ENCODE measurements at regions of chr19 and their contacts with region 1.

Region 1: DNA sequence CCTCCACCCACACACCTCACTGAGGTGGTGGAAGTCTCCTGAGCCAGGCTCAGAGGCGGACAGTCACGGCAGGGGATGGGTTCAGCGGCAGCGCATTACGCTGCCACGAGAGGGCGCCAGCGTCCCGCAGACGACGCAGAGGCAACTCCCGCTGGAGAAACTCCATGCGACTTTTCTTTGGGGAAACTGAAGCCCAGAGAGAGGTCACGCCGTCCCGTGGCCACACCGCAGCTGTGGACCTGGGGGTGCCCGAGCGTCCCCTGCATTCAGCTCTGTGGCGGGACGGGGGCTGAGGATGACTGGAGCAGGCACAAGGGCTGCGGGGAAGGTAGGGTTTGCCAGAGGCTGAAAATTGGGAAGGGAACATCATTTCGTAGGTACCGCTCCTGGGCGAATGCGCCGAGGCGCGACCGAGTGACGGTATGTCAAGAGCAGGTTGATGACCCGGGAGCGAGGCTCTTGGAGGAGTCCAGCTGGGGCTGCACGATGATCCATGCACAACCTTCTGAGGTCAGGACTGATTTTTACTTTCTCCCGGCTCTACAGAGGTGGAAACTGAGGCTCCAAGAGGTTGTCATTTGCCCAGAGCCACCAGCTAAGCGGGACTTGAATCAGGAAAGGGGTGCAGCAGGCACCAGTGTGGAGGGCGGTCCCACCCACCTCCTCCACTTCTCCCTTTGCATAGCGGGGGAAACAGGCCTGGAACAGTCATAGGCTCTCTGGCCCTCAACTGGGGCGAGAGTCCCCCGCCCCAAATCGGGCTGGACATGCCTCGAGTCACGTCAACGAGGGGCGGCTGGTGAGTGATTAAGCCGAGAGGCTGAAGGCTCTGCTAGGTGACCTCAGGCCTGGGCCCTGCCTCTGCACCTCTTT is 690 bp upstream of the ARRDC2 start:
- DNase-seq: peak; percentile 72 to 91 (median 80)
- ATAC-seq: peak; percentile 57
- H3K4me3 ChIP-seq: peak overlapping the region; percentile 61
- H3K4me3 Mint-ChIP-seq: peak overlapping the region; percentile 91
- H3K27ac ChIP-seq: peak overlapping the region; percentile 84 to 92
- H3K27ac Mint-ChIP-seq: peak overlapping the region; percentile 97
- H3K4me1 ChIP-seq: peaks cover 63% of the 10 kb centered on the region
- H3K4me1 Mint-ChIP-seq: peaks cover 34% of the 10 kb centered on the region
- H3K27me3 ChIP-seq: no peaks in the 10 kb centered on the region
- H3K27me3 Mint-ChIP-seq: peaks cover 5% of the 10 kb centered on the region
- CTCF ChIP-seq: peak; percentile 99

Region 2: DNA sequence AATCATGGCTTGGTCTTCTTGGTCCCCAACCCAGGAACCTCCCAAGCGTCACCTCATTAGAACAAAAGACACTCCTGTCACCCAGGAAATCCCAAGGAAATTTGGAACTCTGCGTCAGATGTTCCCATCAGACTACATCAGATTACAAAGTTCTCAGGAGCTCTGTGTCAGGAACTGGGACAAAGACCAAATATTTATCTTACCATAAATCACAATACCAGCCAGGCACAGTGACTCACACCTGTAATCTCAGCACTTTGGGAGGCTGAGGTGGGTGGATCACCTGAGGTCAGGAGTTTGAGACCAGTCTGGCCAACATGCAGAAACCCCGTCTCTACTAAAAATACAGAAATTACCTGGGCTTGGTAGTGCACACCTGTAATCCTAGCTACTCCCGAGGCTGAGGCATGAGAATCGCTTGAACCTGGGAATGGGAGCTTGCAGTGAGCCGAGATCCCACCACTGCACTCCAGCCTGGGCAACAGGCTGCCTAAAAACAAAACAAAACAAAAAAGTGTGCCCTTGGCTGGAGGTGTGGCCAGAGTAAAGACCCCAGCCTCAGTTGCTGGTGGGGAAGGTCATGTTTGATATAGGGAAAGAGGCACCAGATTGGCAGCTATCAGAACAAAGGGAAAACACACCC is 91.2 kb before region 1 on chr19:
- CTCF ChIA-PET with region 1: no interaction called
- POLR2A ChIA-PET with region 1: no interaction called
- intact Hi-C with region 1: no loop called
- DNase-seq: no peak
- ATAC-seq: no peak
- H3K4me3 ChIP-seq: no peak overlapping the region
- H3K4me3 Mint-ChIP-seq: no peak overlapping the region
- H3K27ac ChIP-seq: no peak overlapping the region
- H3K27ac Mint-ChIP-seq: no peak overlapping the region
- H3K4me1 ChIP-seq: no peaks in the 10 kb centered on the region
- H3K4me1 Mint-ChIP-seq: no peaks in the 10 kb centered on the region
- H3K27me3 ChIP-seq: peaks cover 2 to 8% of the 10 kb centered on the region in 2 experiments
- H3K27me3 Mint-ChIP-seq: peaks cover 5% of the 10 kb centered on the region
- CTCF ChIP-seq: no peak

Region 3: GRCh38 chr19:18023622-18024251 is 16.5 kb after region 1 on chr19:
- CTCF ChIA-PET with region 1: interaction called, 13 read pairs
- POLR2A ChIA-PET with region 1: interaction called, 20 read pairs
- intact Hi-C with region 1: loop called in 1 of 2 experiments (anchors 2 kb)
- DNase-seq: peak; percentile 49 to 95 (median 79)
- ATAC-seq: peak; percentile 84
- H3K4me3 ChIP-seq: no peak overlapping the region
- H3K4me3 Mint-ChIP-seq: peak overlapping the region; percentile 79
- H3K27ac ChIP-seq: peak overlapping the region; percentile 85 to 87
- H3K27ac Mint-ChIP-seq: peak overlapping the region; percentile 94
- H3K4me1 ChIP-seq: peaks cover 56% of the 10 kb centered on the region
- H3K4me1 Mint-ChIP-seq: peaks cover 57% of the 10 kb centered on the region
- H3K27me3 ChIP-seq: no peaks in the 10 kb centered on the region
- H3K27me3 Mint-ChIP-seq: no peaks in the 10 kb centered on the region
- CTCF ChIP-seq: no peak

Region 4: DNA sequence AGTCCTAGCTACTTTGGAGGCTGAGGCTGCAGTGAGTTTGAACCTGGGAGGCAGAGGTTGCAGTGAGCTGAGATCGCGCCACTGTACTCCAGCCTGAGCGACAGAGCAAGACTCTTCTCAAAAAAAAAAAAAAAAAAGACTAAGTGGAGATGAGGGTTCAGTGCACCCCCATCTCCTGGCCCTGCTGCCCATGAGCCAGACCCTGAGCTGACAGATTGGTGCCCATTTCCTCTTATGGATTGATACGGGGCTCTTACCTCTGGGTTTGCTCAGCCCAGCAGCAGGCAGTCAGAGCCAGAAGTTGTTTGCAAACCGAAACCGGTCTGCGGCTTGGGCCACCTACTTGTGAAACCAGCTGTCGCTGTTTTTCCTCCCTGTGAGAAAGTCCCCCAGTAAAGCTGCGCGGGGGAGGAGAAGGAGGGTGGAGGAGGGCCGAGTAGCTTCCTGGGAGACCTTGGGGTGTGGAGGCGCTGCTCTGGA is 37.6 kb after region 1 on chr19:
- CTCF ChIA-PET with region 1: interaction called, 12 read pairs
- POLR2A ChIA-PET with region 1: interaction called, 30 read pairs
- intact Hi-C with region 1: no loop called
- DNase-seq: peak; percentile 68 to 95 (median 79)
- ATAC-seq: peak; percentile 95
- H3K4me3 ChIP-seq: peak overlapping the region; percentile 53
- H3K4me3 Mint-ChIP-seq: peak overlapping the region; percentile 79
- H3K27ac ChIP-seq: peak overlapping the region; percentile 56 to 67
- H3K27ac Mint-ChIP-seq: peak overlapping the region; percentile 92
- H3K4me1 ChIP-seq: peaks cover 34% of the 10 kb centered on the region
- H3K4me1 Mint-ChIP-seq: peaks cover 36% of the 10 kb centered on the region
- H3K27me3 ChIP-seq: no peaks in the 10 kb centered on the region
- H3K27me3 Mint-ChIP-seq: no peaks in the 10 kb centered on the region
- CTCF ChIP-seq: no peak

Region 5: DNA sequence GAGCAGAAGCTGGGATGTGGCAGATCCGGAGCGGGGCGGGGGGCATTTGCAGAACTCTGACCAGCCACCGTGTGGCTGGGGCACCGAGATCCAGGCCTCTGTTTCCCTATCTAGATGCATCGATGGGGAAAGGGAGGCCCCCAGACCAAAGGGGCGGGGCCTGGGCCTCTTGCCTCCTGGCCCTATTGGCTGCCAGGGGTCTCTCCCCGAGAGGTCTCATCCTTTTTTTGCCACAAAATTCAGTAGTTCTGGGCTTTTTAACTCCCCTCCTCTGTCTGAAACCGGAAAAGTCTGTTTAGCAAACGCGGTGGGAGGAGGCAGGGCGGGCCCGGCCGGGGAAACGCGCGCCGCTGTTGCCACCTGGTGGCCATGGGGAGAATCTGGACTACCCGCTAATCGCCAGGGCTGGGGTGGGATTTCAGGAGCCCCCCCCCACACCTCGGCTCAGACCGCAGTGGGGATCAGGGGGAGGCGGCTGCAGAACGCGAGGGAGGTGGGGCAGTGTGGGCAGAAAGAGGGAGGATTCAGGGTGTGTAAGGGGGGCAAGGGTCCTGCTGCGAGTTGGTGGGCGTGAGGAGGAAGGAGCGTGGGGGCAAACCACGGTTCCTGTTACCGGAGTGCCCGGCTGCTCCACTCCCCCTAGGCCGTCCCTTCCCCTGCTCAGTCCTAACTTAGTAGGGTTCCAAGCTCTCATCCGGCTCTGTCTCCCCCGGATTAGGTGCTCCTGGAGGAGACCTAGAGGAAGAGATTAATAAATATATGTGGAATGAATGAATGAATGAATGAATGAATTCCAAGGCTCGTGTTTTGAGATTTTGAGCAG is 51.1 kb after region 1 on chr19:
- CTCF ChIA-PET with region 1: interaction called, 40 read pairs
- POLR2A ChIA-PET with region 1: interaction called, 41 read pairs
- intact Hi-C with region 1: loop called (anchors 1 kb)
- DNase-seq: peak; percentile 74 to 91 (median 82)
- ATAC-seq: peak; percentile 97
- H3K4me3 ChIP-seq: peak overlapping the region; percentile 25
- H3K4me3 Mint-ChIP-seq: no peak overlapping the region
- H3K27ac ChIP-seq: peak overlapping the region in 1 of 2 donors; percentile 22
- H3K27ac Mint-ChIP-seq: peak overlapping the region; percentile 63
- H3K4me1 ChIP-seq: peaks cover 13% of the 10 kb centered on the region
- H3K4me1 Mint-ChIP-seq: peaks cover 17% of the 10 kb centered on the region
- H3K27me3 ChIP-seq: no peaks in the 10 kb centered on the region
- H3K27me3 Mint-ChIP-seq: no peaks in the 10 kb centered on the region
- CTCF ChIP-seq: peak; percentile 98

Region 6: GRCh38 chr19:18152444-18152816 is 145.2 kb after region 1 on chr19:
- CTCF ChIA-PET with region 1: interaction called, 3 read pairs
- POLR2A ChIA-PET with region 1: interaction called, 7 read pairs
- intact Hi-C with region 1: loop called (anchors 1 to 5 kb)
- DNase-seq: peak; percentile 94 to 99 (median 98)
- ATAC-seq: peak; percentile 67
- H3K4me3 ChIP-seq: peak overlapping the region; percentile 78
- H3K4me3 Mint-ChIP-seq: peak overlapping the region; percentile 86
- H3K27ac ChIP-seq: peak overlapping the region; percentile 64 to 88
- H3K27ac Mint-ChIP-seq: peak overlapping the region; percentile 80
- H3K4me1 ChIP-seq: peaks cover 36% of the 10 kb centered on the region
- H3K4me1 Mint-ChIP-seq: peaks cover 23% of the 10 kb centered on the region
- H3K27me3 ChIP-seq: no peaks in the 10 kb centered on the region
- H3K27me3 Mint-ChIP-seq: no peaks in the 10 kb centered on the region
- CTCF ChIP-seq: peak; percentile 58

Region 7: GRCh38 chr19:18167975-18168645 is 160.8 kb after region 1 on chr19:
- CTCF ChIA-PET with region 1: interaction called, 5 read pairs
- POLR2A ChIA-PET with region 1: interaction called, 4 read pairs
- intact Hi-C with region 1: loop called in 1 of 2 experiments (anchors 2 kb)
- DNase-seq: peak; percentile 42 to 80 (median 53)
- ATAC-seq: peak; percentile 97
- H3K4me3 ChIP-seq: no peak overlapping the region
- H3K4me3 Mint-ChIP-seq: no peak overlapping the region
- H3K27ac ChIP-seq: no peak overlapping the region
- H3K27ac Mint-ChIP-seq: no peak overlapping the region
- H3K4me1 ChIP-seq: peaks cover 16% of the 10 kb centered on the region
- H3K4me1 Mint-ChIP-seq: peaks cover 4% of the 10 kb centered on the region
- H3K27me3 ChIP-seq: no peaks in the 10 kb centered on the region
- H3K27me3 Mint-ChIP-seq: no peaks in the 10 kb centered on the region
- CTCF ChIP-seq: peak; percentile 72

Measured in CD4-positive, alpha-beta T cell (primary cell).